Panc1 (cell line): ENCODE measurements at regions of chr4 and their contacts with region 1.

Region 1: DNA sequence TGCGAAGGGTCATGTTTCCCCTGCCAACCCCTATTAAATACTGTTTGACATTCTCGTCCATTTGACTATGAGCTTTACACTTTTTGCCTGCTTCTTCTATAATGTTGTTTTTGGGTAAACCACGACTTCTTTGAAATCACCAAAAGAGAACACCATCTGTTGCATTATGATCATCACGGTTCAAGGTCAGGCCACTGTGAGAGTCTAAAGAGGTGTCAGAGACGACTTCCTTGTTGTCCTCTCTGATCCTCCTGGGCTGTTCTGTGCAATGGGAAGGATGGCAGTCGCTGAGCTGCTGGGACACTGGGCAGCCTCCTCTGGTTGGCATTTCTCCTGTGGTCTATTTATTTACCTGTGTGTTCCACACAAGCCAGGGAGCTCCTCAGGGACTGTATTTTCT is 137.5 kb downstream of the RASL11B start:
- DNase-seq: no peak
- ATAC-seq: no peak
- H3K4me3 ChIP-seq: no peak overlapping the region
- H3K27ac ChIP-seq: no peak overlapping the region
- H3K4me1 ChIP-seq: no peaks in the 10 kb centered on the region
- H3K27me3 ChIP-seq: no peaks in the 10 kb centered on the region
- CTCF ChIP-seq: no peak

Region 2: DNA sequence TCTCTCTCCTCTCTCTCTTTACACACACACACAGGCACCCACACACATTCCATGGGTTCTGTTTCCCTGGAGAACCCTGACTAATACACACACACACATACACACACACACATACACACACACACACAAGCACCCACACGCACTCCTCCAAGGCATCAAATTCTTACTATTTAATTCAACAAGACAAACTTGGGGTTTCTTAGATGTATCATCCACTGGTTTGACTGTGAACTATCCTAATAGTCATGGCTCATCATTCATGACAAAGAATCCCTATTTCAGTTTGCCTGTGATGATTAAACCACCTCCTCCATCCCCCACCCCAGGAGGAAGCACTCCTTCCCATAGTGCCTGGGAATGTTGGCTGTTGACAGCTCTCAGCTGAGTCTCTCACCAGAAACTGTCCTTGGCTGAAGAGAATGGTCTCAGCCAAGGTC is 438.8 kb before region 1 on chr4:
- CTCF ChIA-PET with region 1: no interaction called
- POLR2A ChIA-PET with region 1: no interaction called
- in situ Hi-C with region 1: no loop called
- intact Hi-C with region 1: no loop called
- DNase-seq: no peak
- ATAC-seq: no peak
- H3K4me3 ChIP-seq: no peak overlapping the region
- H3K27ac ChIP-seq: no peak overlapping the region
- H3K4me1 ChIP-seq: no peaks in the 10 kb centered on the region
- H3K27me3 ChIP-seq: no peaks in the 10 kb centered on the region
- CTCF ChIP-seq: no peak

Region 3: DNA sequence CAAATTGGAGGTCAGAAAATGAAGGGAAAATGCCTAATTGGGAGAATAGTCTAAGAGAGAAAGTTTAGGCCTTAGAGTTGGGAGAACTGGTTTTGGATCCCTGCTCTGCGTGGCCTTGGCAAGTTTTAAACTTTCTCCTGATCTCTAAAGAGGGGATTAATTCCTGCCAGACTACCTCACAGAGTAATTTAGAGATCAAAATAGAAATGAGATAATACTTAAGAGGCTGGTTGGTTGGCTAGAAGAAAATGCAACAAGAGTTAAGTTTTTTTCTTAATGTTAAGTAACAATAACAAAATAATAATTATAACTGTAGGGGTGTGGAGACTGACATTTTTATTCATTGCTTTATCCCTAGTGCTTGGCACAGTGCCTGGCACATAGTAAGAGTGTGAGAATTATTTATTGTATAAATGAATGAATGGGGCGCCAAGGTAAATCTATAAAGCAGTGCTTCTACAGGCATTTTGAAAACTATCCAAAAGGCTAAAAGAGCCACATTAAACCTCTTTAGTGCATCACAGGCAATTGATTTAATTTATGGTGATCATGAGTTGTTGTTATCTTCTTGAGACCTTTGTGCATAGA is 23.0 kb after region 1 on chr4:
- CTCF ChIA-PET with region 1: no interaction called
- POLR2A ChIA-PET with region 1: no interaction called
- in situ Hi-C with region 1: no loop called
- intact Hi-C with region 1: loop called (anchors 1 kb)
- DNase-seq: no peak
- ATAC-seq: no peak
- H3K4me3 ChIP-seq: no peak overlapping the region
- H3K27ac ChIP-seq: no peak overlapping the region
- H3K4me1 ChIP-seq: 0 out of 2 replicates have a peak, but pooled peaks cover 4% of the 10 kb centered on the region
- H3K27me3 ChIP-seq: no peaks in the 10 kb centered on the region
- CTCF ChIP-seq: no peak